ENCODE measurements at regions of chr16 and their contacts with region 1.

Region 1: DNA sequence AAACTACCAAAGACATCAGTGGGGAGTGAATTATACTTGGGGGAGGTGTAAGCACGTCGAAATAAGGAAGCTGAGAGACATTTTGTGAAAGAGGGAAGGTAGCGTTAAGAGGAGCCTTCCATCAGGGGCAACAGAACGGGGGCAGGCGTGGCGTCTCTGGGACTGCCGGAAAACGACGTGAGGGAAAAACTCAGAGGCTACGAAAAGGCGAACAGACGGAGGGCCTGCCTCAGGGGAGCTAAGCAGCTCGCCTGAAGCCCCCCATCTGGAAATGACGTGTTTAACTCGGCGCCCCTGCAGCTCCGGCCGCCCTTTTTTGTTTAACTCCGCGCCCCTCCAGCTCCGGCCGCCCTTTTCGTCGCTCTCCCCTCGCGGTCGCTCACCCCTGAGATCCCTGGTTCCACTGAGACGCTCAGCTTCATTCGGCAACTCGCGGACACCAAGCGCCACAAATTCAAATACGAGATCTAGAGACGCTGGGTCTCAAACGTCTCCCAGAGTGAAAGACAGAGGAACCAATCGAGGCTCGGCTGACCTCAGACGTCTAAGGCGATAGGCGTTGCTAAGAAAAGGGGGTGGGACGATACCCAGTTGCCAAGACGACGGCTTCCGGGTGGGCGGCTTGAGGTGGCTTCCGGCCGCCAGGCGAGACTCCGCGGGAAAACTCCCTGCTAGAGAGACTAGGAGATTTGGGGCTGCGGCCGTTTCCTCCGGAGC is 383.3 kb downstream of the ZFHX3 start:
- DNase-seq: peak; percentile 98
- H3K4me3 ChIP-seq: peak overlapping the region; percentile 94
- H3K27ac ChIP-seq: peak overlapping the region; percentile 84
- H3K4me1 ChIP-seq: peaks cover 55% of the 10 kb centered on the region
- CTCF ChIP-seq: no peak

Region 2: DNA sequence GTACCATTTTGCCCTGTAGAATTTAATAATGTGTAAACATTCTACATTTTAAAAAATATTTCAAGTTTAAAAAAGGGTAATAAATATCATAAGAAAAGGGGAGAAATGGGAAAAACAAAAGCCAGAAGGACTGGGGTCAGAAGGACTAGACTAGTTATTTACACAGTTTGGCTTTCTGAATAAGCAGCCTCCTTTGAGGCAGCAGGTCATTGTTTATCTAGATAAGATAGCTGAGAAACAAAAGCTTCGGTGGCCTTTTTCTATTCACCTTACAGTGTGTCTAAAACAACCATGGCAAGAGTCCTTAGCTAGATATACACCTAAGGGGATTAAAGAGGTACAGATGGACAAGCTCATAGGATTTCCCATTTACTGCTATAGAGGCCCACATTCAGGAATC is 96.2 kb before region 1 on chr16:
- CTCF ChIA-PET with region 1: no interaction called
- POLR2A ChIA-PET with region 1: no interaction called
- intact Hi-C with region 1: no loop called
- DNase-seq: no peak
- H3K4me3 ChIP-seq: no peak overlapping the region
- H3K27ac ChIP-seq: no peak overlapping the region
- H3K4me1 ChIP-seq: no peaks in the 10 kb centered on the region
- CTCF ChIP-seq: no peak

Region 3: GRCh38 chr16:72646615-72647014 is 18.1 kb before region 1 on chr16:
- CTCF ChIA-PET with region 1: interaction called, 3 read pairs
- POLR2A ChIA-PET with region 1: interaction called, 15 read pairs
- intact Hi-C with region 1: no loop called
- DNase-seq: peak; percentile 31
- H3K4me3 ChIP-seq: no peak overlapping the region
- H3K27ac ChIP-seq: no peak overlapping the region
- H3K4me1 ChIP-seq: peaks cover 25% of the 10 kb centered on the region
- CTCF ChIP-seq: no peak

Region 4: GRCh38 chr16:73058221-73058615 is 393.6 kb after region 1 on chr16:
- CTCF ChIA-PET with region 1: no interaction called
- POLR2A ChIA-PET with region 1: interaction called, 4 read pairs
- intact Hi-C with region 1: loop called (anchors 5 kb)
- DNase-seq: peak; percentile 72
- H3K4me3 ChIP-seq: peak overlapping the region; percentile 85
- H3K27ac ChIP-seq: peak overlapping the region; percentile 40
- H3K4me1 ChIP-seq: peaks cover 51% of the 10 kb centered on the region
- CTCF ChIP-seq: no peak